Posterior vena cava (tissue), 2 donors: ENCODE measurements at regions of chr1 and their contacts with region 1.

Region 1: DNA sequence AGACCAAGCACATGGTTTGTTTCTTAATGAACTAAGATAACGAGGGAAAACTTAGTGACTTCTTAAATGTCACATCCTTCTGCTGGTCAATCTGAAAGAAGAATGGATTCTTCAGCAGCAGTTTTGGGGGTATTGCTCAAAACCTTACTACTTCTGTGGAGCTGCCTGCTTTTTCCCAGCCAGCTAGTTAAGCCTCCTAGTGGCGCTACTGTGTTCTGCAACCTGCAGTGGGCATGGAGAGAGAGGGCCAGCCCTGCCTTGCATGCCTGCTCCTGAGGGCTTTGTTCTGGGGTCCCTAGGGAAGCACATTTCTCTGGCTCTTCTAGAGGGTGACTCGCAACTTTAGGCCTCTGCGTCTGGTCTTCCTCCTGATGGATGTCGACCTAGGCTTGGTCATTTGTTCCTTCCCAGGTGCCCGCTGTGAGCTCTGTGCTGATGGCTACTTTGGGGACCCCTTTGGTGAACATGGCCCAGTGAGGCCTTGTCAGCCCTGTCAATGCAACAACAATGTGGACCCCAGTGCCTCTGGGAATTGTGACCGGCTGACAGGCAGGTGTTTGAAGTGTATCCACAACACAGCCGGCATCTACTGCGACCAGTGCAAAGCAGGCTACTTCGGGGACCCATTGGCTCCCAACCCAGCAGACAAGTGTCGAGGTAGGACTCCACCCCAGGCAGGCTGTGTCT is 42.0 kb downstream of the LAMC2 start:
- DNase-seq: no peak

Region 2: DNA sequence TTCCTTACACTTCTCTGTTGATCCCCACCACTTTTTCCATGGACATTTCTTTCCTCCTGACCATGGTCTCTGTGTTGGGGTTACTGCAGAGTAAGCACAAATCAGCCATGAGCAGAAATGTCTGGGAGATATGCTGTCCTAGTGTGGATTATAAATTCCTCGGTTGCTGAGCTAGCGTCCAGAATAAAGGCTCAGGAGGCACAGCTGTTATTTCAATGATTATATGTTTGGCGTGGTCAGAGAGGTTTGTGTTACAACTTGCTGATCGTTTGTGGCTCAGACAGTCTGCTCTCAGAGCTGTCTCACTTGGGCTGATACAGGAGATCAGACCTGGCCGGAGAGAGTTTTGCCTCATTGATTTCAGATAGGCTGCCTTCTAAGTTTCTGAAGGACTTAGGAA is 79.5 kb before region 1 on chr1:
- intact Hi-C with region 1: loop called in 1 of 2 experiments (anchors 10 kb)
- DNase-seq: no peak